ENCODE measurements at regions of chr7 and their contacts with region 1.

Region 1: GRCh38 chr7:2049782-2050510 is 182.8 kb downstream of the MAD1L1 start:
- DNase-seq: peak; percentile 51 to 53
- ATAC-seq: peak; percentile 74 to 93 (median 81)
- H3K4me3 ChIP-seq: no peak overlapping the region
- H3K4me3 Mint-ChIP-seq: peak overlapping the region; percentile 64
- H3K27ac ChIP-seq: peak overlapping the region; percentile 36
- H3K27ac Mint-ChIP-seq: peak overlapping the region; percentile 68 to 90
- H3K4me1 ChIP-seq: peaks cover 44% of the 10 kb centered on the region
- H3K4me1 Mint-ChIP-seq: peaks cover 50 to 53% of the 10 kb centered on the region in 2 donors
- H3K27me3 ChIP-seq: no peaks in the 10 kb centered on the region
- H3K27me3 Mint-ChIP-seq: peaks cover 10 to 13% of the 10 kb centered on the region in 2 donors
- CTCF ChIP-seq: no peak

Region 2: DNA sequence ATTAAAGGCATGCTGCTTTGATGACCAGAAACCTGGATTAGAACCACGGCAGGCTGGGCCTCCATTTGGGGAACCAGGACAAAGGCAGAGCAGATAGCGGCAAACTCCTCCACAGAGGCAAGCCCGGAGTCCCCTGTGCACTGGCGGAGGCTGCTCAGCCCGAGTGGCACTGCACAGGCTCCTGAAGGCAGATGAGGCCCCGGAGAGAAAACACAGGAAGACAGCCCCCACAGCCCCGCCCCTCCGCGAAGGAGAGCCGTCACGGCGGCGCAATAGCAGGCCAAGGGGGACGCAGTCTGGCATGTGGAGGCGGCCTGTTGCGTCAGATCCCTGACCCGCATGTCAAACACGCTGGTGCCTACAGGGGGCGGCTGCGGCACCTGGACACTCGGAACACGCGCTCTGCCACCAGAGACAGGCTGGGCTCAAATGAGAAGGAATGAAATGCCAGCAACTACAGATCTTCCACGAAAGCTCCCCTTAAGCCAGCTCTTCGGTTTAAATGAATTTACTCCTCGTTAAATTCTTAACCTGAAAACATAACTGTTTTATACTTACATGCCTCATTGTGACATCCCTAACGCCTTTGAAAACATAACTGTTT is 54.3 kb after region 1 on chr7:
- intact Hi-C with region 1: loop called (anchors 2 kb)
- DNase-seq: peak; percentile 42 to 84
- ATAC-seq: peak; percentile 58 to 63 (median 61)
- H3K4me3 ChIP-seq: no peak overlapping the region
- H3K4me3 Mint-ChIP-seq: no peak overlapping the region
- H3K27ac ChIP-seq: no peak overlapping the region
- H3K27ac Mint-ChIP-seq: peak overlapping the region in 1 of 2 donors; percentile 21
- H3K4me1 ChIP-seq: peaks cover 57% of the 10 kb centered on the region
- H3K4me1 Mint-ChIP-seq: peaks cover 55 to 56% of the 10 kb centered on the region in 2 donors
- H3K27me3 ChIP-seq: no peaks in the 10 kb centered on the region
- H3K27me3 Mint-ChIP-seq: peaks cover 0 to 5% of the 10 kb centered on the region in 2 donors
- CTCF ChIP-seq: peak; percentile 46